ENCODE measurements at regions of chr6 and their contacts with region 1.

Region 1: GRCh38 chr6:24283043-24283985 is 74.5 kb downstream of the DCDC2 start:
- DNase-seq: peak in 12 of 14 experiments; percentile 3 to 57 (median 14)
- ATAC-seq: peak; percentile 80
- H3K4me3 ChIP-seq: no peak overlapping the region
- H3K4me3 Mint-ChIP-seq: peak overlapping the region; percentile 48
- H3K27ac ChIP-seq: no peak overlapping the region
- H3K27ac Mint-ChIP-seq: no peak overlapping the region
- H3K4me1 ChIP-seq: peaks cover 3% of the 10 kb centered on the region
- H3K4me1 Mint-ChIP-seq: peaks cover 8% of the 10 kb centered on the region
- H3K27me3 ChIP-seq: peaks cover 2 to 12% of the 10 kb centered on the region in 2 experiments
- H3K27me3 Mint-ChIP-seq: peaks cover 33% of the 10 kb centered on the region
- CTCF ChIP-seq: peak; percentile 78

Region 2: DNA sequence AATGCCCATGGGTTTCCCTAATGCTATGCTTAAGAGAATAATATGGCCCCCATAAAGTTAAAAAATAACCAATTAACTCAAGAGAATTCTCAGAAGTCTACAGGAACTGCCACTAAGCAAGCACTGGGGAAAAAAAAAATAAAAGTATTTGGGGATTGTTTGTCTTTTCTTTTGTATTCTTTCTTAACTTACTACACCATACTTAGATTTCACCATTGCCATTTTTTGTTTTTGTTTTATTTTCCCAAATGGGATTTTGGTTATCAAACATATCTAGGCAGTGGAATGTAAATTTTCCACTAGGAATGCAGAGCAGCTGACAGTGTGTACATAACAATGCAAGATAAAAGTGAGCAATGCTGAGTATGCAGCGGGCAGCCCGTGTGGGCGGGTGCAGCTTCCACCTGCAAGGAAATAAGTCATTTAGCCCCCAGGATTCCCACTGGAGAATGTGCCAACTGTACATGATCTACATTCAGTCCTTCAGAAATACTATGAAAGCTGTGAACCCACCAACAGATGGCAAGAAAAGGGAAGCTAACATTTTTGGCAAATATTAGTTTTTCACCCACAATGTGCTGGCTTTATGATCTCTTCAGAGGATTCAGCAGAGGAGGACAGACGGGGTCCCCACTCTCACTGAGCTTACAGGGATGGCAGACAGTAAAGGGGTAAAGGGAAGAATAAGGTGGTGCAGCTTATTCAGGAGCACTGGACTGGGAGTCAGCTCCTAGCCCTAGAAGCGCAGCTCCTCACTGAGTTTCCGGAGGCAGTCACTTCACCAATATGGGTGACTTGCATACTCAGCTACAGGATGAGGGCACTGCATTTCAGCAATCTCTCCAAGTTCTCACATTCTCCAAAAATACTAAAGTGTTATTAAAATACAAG is 30.2 kb after region 1 on chr6:
- CTCF ChIA-PET with region 1: no interaction called
- POLR2A ChIA-PET with region 1: no interaction called
- intact Hi-C with region 1: no loop called
- DNase-seq: no peak
- ATAC-seq: no peak
- H3K4me3 ChIP-seq: no peak overlapping the region
- H3K4me3 Mint-ChIP-seq: no peak overlapping the region
- H3K27ac ChIP-seq: no peak overlapping the region
- H3K27ac Mint-ChIP-seq: no peak overlapping the region
- H3K4me1 ChIP-seq: no peaks in the 10 kb centered on the region
- H3K4me1 Mint-ChIP-seq: no peaks in the 10 kb centered on the region
- H3K27me3 ChIP-seq: peaks cover 8 to 10% of the 10 kb centered on the region in 2 experiments
- H3K27me3 Mint-ChIP-seq: peaks cover 31% of the 10 kb centered on the region
- CTCF ChIP-seq: no peak

Region 3: GRCh38 chr6:24520929-24521546 is 237.7 kb after region 1 on chr6:
- CTCF ChIA-PET with region 1: no interaction called
- POLR2A ChIA-PET with region 1: no interaction called
- intact Hi-C with region 1: loop called in 1 of 2 experiments (anchors 10 kb)
- DNase-seq: peak in 11 of 14 experiments; percentile 7 to 54 (median 33)
- ATAC-seq: peak; percentile 43
- H3K4me3 ChIP-seq: no peak overlapping the region
- H3K4me3 Mint-ChIP-seq: no peak overlapping the region
- H3K27ac ChIP-seq: no peak overlapping the region
- H3K27ac Mint-ChIP-seq: no peak overlapping the region
- H3K4me1 ChIP-seq: no peaks in the 10 kb centered on the region
- H3K4me1 Mint-ChIP-seq: no peaks in the 10 kb centered on the region
- H3K27me3 ChIP-seq: no peaks in the 10 kb centered on the region
- H3K27me3 Mint-ChIP-seq: no peaks in the 10 kb centered on the region
- CTCF ChIP-seq: peak; percentile 59

Region 4: GRCh38 chr6:24699521-24700359 is 416.4 kb after region 1 on chr6:
- CTCF ChIA-PET with region 1: no interaction called
- POLR2A ChIA-PET with region 1: no interaction called
- intact Hi-C with region 1: loop called in 1 of 2 experiments (anchors 5 kb)
- DNase-seq: no peak
- ATAC-seq: no peak
- H3K4me3 ChIP-seq: no peak overlapping the region
- H3K4me3 Mint-ChIP-seq: no peak overlapping the region
- H3K27ac ChIP-seq: no peak overlapping the region
- H3K27ac Mint-ChIP-seq: peak overlapping the region; percentile 69
- H3K4me1 ChIP-seq: no peaks in the 10 kb centered on the region
- H3K4me1 Mint-ChIP-seq: peaks cover 25% of the 10 kb centered on the region
- H3K27me3 ChIP-seq: no peaks in the 10 kb centered on the region
- H3K27me3 Mint-ChIP-seq: no peaks in the 10 kb centered on the region
- CTCF ChIP-seq: no peak

Region 5: GRCh38 chr6:24766680-24767462 is 483.6 kb after region 1 on chr6:
- CTCF ChIA-PET with region 1: no interaction called
- POLR2A ChIA-PET with region 1: no interaction called
- intact Hi-C with region 1: loop called in 1 of 2 experiments (anchors 5 kb)
- DNase-seq: peak in 3 of 14 experiments; percentile 43 to 58 (median 55)
- ATAC-seq: peak; percentile 83
- H3K4me3 ChIP-seq: no peak overlapping the region
- H3K4me3 Mint-ChIP-seq: no peak overlapping the region
- H3K27ac ChIP-seq: no peak overlapping the region
- H3K27ac Mint-ChIP-seq: no peak overlapping the region
- H3K4me1 ChIP-seq: no peaks in the 10 kb centered on the region
- H3K4me1 Mint-ChIP-seq: no peaks in the 10 kb centered on the region
- H3K27me3 ChIP-seq: no peaks in the 10 kb centered on the region
- H3K27me3 Mint-ChIP-seq: no peaks in the 10 kb centered on the region
- CTCF ChIP-seq: peak; percentile 69